ENCODE measurements at regions of chr19 and their contacts with region 1.

Region 1: GRCh38 chr19:16638666-16639065 is 10.7 kb upstream of the MED26 start:
- DNase-seq: no peak
- ATAC-seq: no peak

Region 2: DNA sequence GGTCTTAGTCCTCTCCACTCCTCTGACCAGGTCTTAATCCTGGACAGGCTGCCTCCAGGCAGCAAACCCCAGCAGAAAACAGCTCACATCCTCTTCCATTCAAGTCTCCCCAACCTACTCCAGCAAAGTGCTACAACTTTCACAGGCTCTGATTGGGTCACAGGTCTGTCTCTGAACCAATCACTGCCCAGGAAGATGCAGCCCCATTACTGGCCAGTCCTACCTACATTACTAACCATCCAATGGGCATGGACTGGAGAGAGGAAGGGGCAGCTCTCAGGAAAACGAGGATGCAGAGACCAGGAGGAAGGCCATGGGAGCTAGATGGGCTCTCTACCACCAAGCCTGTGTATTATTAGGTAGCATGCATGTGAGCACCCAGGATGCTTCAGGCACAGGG is 22.9 kb before region 1 on chr19:
- intact Hi-C with region 1: loop called (anchors 2 kb)
- DNase-seq: no peak
- ATAC-seq: no peak

Region 3: GRCh38 chr19:16671652-16672274 is 33.1 kb after region 1 on chr19:
- intact Hi-C with region 1: no loop called
- DNase-seq: no peak
- ATAC-seq: no peak

Region 4: GRCh38 chr19:16688084-16688483 is 49.4 kb after region 1 on chr19:
- intact Hi-C with region 1: no loop called
- DNase-seq: no peak
- ATAC-seq: no peak

Region 5: DNA sequence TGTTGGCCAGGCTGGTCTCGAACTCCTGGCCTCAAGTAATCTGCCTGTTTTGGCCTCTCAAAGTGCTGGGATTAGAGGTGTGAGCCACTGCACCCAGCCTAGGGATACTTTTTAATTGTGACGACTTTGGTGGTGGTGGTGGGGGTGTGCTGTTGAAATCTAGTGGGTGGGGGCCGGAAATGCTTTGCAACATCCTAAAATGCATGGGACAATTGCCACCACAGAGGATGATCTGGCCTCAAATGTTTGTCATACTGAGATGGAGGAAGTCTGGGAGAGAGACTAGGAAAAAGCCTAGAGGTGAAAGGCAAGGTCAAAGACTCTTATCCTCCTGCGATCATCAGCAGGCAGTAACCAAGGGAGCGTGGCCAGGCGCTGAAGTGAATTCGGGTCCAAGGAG is 82.4 kb after region 1 on chr19:
- intact Hi-C with region 1: no loop called
- DNase-seq: no peak
- ATAC-seq: no peak

Measured in sciatic nerve (tissue), 2 donors.